Panc1 (cell line): ENCODE measurements at regions of chr7 and their contacts with region 1.

Region 1: GRCh38 chr7:40000734-40001315 is 50.8 kb downstream of the CDK13 start:
- DNase-seq: no peak
- ATAC-seq: no peak
- H3K4me3 ChIP-seq: no peak overlapping the region
- H3K27ac ChIP-seq: no peak overlapping the region
- H3K4me1 ChIP-seq: no peaks in the 10 kb centered on the region
- H3K27me3 ChIP-seq: no peaks in the 10 kb centered on the region
- CTCF ChIP-seq: no peak

Region 2: GRCh38 chr7:40015790-40016296 is 15.0 kb after region 1 on chr7:
- CTCF ChIA-PET with region 1: no interaction called
- POLR2A ChIA-PET with region 1: interaction called, 11 read pairs
- in situ Hi-C with region 1: no loop called
- intact Hi-C with region 1: no loop called
- DNase-seq: no peak
- ATAC-seq: no peak
- H3K4me3 ChIP-seq: no peak overlapping the region
- H3K27ac ChIP-seq: no peak overlapping the region
- H3K4me1 ChIP-seq: no peaks in the 10 kb centered on the region
- H3K27me3 ChIP-seq: no peaks in the 10 kb centered on the region
- CTCF ChIP-seq: no peak

Region 3: DNA sequence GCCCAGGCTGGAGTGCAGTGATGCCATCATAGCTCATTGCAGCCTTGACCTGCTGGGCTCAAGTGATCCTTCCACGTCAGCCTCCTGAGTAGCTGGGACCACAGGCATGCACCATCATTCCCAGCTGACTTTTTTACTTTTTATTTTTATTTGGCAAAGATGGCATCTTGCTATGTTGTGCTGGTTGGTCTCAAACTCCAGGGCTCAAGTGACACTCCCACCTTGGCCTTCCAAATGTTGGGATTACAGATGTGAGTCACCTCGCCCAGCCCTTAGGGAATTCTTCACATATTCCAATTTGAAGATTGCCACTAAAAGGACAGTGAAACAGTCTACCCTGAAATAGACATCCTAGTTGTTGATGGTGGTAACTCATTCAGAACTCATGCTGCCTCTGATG is 161.7 kb after region 1 on chr7:
- CTCF ChIA-PET with region 1: no interaction called
- POLR2A ChIA-PET with region 1: no interaction called
- in situ Hi-C with region 1: no loop called
- intact Hi-C with region 1: no loop called
- DNase-seq: no peak
- ATAC-seq: no peak
- H3K4me3 ChIP-seq: no peak overlapping the region
- H3K27ac ChIP-seq: no peak overlapping the region
- H3K4me1 ChIP-seq: no peaks in the 10 kb centered on the region
- H3K27me3 ChIP-seq: no peaks in the 10 kb centered on the region
- CTCF ChIP-seq: no peak